ENCODE measurements at regions of chr4 and their contacts with region 1.

Region 1: GRCh38 chr4:6986781-6987587 is 56.2 kb upstream of the TADA2B start:
- DNase-seq: peak; percentile 96 to 98 (median 98)
- ATAC-seq: peak; percentile 89
- H3K4me3 ChIP-seq: peak overlapping the region; percentile 71
- H3K27ac ChIP-seq: peak overlapping the region; percentile 92
- H3K4me1 ChIP-seq: peaks cover 31 to 44% of the 10 kb centered on the region in 2 experiments; a peak in 4 of 5 replicates
- H3K27me3 ChIP-seq: no peaks in the 10 kb centered on the region
- CTCF ChIP-seq: peak in 1 of 3 experiments; percentile 14; a peak in 2 of 6 replicates
- EP300 ChIP-seq: no peak
- POLR2A ChIP-seq: peak; percentile 79
- RAD21 ChIP-seq: no peak; a peak in 1 of 4 replicates

Region 2: DNA sequence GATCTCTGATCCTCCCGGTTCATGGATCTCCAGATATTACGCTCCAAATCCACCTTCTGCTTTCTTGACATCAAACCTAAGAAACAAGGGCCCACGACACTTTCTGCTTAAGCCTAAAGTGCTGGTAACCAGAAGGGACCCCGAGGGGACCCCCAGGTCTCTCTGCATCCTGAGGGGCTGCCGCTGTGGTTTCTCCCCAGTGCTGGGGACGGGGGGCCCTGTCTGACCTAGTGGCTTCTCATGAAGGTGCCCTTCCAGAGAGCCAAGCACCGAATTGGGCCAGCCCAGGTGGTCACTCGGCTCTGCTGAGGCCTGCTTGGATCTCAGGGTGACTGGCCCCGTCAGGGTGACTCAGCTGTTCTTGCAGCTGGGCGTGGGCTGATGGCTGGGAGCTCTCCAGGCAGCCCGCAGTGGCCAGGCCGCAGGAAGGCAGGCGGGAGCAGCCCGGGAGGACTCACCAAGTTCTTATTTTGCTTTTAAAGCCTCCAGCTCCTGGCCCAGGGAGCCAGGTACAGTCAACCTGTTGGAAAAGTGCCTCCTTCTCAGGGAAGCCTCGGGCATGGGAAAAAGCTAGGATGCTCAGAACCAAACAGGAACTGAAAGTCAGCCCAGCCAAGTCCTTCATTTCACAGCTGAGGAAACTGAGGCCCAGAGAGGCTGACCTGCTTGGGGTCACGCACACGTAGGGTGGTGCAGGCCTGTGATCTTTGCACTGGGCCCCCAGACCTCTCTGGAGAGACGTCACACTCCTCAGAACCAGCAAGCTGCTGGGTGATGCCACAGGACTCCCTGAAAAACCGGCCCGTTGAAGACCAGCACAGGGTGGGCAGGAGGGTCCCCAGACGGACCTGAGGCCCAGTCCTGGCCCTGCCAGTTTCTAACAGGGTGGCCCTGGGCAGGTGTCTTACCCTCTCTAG is 254.3 kb before region 1 on chr4:
- CTCF ChIA-PET with region 1: no interaction called
- POLR2A ChIA-PET with region 1: interaction called, 4 read pairs
- in situ Hi-C with region 1: no loop called
- intact Hi-C with region 1: loop called (anchors 5 kb)
- DNase-seq: peak; percentile 86 to 95 (median 89)
- ATAC-seq: peak; percentile 92
- H3K4me3 ChIP-seq: no peak overlapping the region
- H3K27ac ChIP-seq: peak overlapping the region; percentile 93
- H3K4me1 ChIP-seq: peaks cover 55 to 58% of the 10 kb centered on the region in 2 experiments
- H3K27me3 ChIP-seq: no peaks in the 10 kb centered on the region
- CTCF ChIP-seq: no peak
- EP300 ChIP-seq: peak; percentile 88
- POLR2A ChIP-seq: peak; percentile 80
- RAD21 ChIP-seq: peak in 1 of 2 experiments; percentile 39; a peak in 2 of 4 replicates

Region 3: DNA sequence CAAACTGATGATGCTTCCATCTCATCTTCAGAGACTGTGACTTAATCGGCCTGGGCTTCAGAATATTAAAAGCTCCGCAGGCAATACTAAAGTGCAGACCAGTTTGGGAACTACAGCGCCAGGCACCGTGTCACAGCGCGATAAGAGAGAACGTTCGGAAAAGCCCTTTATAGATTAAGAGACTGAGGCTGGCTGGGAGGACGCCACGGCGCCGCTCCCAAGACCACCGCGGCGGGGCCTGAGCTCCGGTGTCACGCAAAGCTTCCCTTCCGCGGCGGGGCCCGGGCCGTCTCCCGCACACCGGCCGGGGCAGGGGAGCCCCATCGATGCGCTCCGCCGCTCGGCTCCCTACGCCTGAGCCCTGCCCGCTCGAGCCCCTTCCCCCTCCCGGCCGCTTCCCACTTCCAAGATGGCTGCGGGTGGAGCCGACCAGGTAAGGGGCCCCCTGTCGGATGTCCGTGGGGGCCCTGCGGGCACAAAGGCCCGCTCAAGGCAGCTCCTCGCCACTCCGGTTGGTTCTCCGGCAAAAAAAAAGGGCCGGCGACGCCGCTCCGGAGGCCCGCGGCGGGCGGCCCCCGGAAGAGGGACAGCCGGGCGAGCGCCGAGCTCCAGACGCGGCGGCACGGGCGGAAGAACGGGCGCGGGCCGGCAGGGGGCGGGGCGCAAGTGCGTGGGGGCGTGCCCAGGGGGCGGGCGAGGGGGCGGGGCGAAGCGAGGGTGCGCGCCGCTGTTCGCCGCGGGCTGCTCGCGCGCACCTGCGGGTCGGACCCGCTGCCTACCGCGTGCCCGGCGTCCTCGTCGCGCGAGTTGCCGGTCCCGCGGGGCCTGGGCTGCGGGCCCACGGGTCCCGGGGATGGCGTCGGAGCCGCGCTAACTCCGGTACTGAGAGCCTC is 77.7 kb before region 1 on chr4 and contains the start of gene TBC1D14:
- CTCF ChIA-PET with region 1: no interaction called
- POLR2A ChIA-PET with region 1: interaction called, 17 read pairs
- in situ Hi-C with region 1: no loop called
- intact Hi-C with region 1: loop called (anchors 2 kb)
- DNase-seq: peak; percentile 90 to 96 (median 94)
- ATAC-seq: peak; percentile 86
- H3K4me3 ChIP-seq: peak within 1 kb of the TSS; percentile 94
- H3K27ac ChIP-seq: peak within 1 kb of the TSS; percentile 98
- H3K4me1 ChIP-seq: peaks cover 48 to 58% of the 10 kb centered on the region in 2 experiments
- H3K27me3 ChIP-seq: no peaks in the 10 kb centered on the region
- CTCF ChIP-seq: 0 out of 6 replicates have a peak, but pooled peaks of 2 of the 3 experiments have one; percentile 19 to 23
- EP300 ChIP-seq: 0 out of 2 replicates have a peak, but pooled peaks have one; percentile 27
- POLR2A ChIP-seq: peak; percentile 78
- RAD21 ChIP-seq: no peak
- polyA plus RNA-seq, gene TBC1D14: 2.1 to 2.7 TPM

Region 4: DNA sequence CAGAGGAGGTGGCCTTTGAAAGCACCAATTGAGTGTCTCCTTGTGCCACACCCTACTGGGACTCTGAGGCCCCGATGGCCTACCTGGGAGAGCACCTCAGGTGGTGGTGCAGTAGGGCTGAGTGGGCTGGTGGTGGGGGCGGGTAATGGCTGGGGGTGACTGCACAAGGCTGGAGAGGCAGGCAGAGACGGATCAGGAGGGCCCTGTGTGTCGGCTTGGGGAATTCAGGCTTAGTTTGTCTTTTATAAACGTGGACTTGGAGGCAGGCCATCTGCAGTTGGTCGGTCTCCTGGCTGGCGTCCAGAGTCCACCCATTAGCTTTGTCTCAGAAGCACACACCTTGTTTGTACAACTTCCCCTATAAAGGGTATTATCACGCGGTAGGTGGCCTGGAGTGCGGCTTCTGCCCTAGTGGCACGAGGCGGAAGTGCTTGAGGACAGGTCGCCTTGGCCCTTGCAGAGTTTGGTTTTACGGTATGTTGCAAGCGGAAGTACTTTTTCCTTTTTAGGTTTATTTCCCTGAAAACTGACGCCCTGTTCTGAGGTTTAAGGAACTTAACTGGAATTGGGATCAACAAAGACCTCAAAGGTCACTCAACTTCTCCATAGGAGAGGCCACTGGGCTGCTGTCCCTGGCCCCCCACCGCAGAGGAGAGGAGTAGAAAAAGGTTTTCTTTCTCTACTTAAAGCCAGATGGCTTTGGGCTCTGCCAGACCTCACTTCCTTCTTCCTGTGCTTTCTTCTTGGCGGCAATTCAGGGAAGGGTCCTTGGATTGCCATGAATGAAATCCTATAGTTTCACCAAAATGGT is 69.3 kb before region 1 on chr4:
- CTCF ChIA-PET with region 1: no interaction called
- POLR2A ChIA-PET with region 1: interaction called, 17 read pairs
- in situ Hi-C with region 1: no loop called
- intact Hi-C with region 1: loop called (anchors 2 kb)
- DNase-seq: peak; percentile 63 to 92 (median 70)
- ATAC-seq: peak; percentile 81
- H3K4me3 ChIP-seq: peak overlapping the region; percentile 15; the same call in 1 of the 2 replicates
- H3K27ac ChIP-seq: peak overlapping the region; percentile 97
- H3K4me1 ChIP-seq: peaks cover 58 to 60% of the 10 kb centered on the region in 2 experiments
- H3K27me3 ChIP-seq: no peaks in the 10 kb centered on the region; a peak in 1 of 5 replicates
- CTCF ChIP-seq: peak; percentile 64 to 82 (median 69)
- EP300 ChIP-seq: 0 out of 2 replicates have a peak, but pooled peaks have one; percentile 58
- POLR2A ChIP-seq: no peak
- RAD21 ChIP-seq: no peak; a peak in 1 of 4 replicates

Region 5: DNA sequence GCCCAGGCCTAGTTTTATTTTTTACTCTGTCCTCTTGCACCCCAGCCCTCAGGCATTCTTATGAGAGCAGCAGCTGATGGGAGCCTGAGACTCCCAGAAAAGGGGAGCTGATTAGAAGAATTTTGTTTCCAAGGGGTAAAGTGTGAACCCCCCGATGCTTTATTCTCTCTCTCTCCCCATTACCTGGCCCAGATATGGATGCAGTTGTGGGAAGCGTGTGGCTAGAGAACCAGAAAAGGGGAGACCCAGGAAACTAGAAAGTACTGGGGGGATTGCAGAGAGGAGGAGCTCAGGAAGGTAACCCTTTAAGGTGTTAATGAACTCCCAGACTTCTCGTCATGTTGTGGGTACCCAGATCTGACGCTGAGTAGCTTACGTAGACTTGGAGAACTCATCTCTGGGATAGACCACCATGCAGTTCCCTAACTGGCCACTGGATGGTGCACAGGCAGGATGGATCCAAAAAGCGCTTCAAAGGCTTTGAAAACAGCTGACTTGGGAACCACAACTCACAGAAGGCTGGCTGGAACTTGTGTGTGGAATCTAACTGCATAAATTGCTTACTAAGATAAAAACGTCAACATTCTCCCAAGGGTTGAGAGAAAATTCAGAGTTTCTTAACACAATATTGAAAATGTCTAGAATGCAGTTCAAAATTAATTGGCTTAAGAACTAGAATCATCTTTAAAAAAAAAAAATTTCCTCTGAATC is 12.7 kb before region 1 on chr4:
- CTCF ChIA-PET with region 1: interaction called, 3 read pairs
- POLR2A ChIA-PET with region 1: interaction called, 11 read pairs
- in situ Hi-C with region 1: no loop called
- intact Hi-C with region 1: no loop called
- DNase-seq: peak; percentile 78 to 88 (median 82)
- ATAC-seq: peak; percentile 97
- H3K4me3 ChIP-seq: no peak overlapping the region
- H3K27ac ChIP-seq: no peak overlapping the region
- H3K4me1 ChIP-seq: peaks cover 3 to 14% of the 10 kb centered on the region in 2 experiments
- H3K27me3 ChIP-seq: no peaks in the 10 kb centered on the region
- CTCF ChIP-seq: peak; percentile 85 to 95 (median 86)
- EP300 ChIP-seq: no peak
- POLR2A ChIP-seq: no peak
- RAD21 ChIP-seq: peak; percentile 52 to 74

Region 6: GRCh38 chr4:7017446-7018330 is 30.7 kb after region 1 on chr4:
- CTCF ChIA-PET with region 1: no interaction called
- POLR2A ChIA-PET with region 1: no interaction called
- in situ Hi-C with region 1: no loop called
- intact Hi-C with region 1: no loop called
- DNase-seq: no peak
- ATAC-seq: no peak
- H3K4me3 ChIP-seq: no peak overlapping the region
- H3K27ac ChIP-seq: no peak overlapping the region; the same call in 2 of the 3 replicates
- H3K4me1 ChIP-seq: peaks cover 13 to 29% of the 10 kb centered on the region in 2 experiments; a peak in 4 of 5 replicates
- H3K27me3 ChIP-seq: no peaks in the 10 kb centered on the region
- CTCF ChIP-seq: no peak
- EP300 ChIP-seq: no peak
- POLR2A ChIP-seq: no peak
- RAD21 ChIP-seq: no peak

Region 7: DNA sequence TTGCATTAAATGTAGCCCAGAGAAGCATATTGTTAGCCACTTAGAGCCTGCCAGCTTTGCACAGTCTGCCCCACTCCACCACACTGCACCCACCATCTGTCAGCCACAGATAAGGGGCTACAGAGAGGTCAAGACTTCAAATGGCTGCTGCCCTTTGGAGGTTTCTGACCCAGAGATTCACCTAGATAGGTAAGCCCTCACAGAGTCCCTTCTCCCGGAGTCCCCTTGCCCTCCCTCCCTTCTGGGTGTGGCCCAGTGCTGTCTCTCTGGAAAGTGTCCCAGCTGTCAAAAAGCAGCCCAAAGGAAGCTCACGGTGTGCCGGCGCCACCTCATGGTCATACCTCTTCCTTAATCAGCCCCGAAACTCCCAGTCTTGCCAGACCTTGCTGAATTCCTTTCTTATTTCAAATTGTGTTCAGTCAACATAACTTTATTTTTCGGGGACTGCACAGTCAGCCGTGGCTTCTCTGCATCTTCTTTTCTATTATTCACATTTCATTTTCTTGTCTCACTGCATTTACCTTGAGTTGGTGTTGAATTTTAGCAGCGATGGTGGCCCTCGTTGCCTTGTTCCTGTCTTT is 95.0 kb after region 1 on chr4:
- CTCF ChIA-PET with region 1: no interaction called
- POLR2A ChIA-PET with region 1: no interaction called
- in situ Hi-C with region 1: no loop called
- intact Hi-C with region 1: loop called (anchors 5 kb)
- DNase-seq: peak; percentile 87 to 95 (median 90)
- ATAC-seq: peak; percentile 98
- H3K4me3 ChIP-seq: no peak overlapping the region
- H3K27ac ChIP-seq: no peak overlapping the region
- H3K4me1 ChIP-seq: peaks cover 11 to 21% of the 10 kb centered on the region in 2 experiments; a peak in 4 of 5 replicates
- H3K27me3 ChIP-seq: no peaks in the 10 kb centered on the region
- CTCF ChIP-seq: peak; percentile 84 to 96 (median 89)
- EP300 ChIP-seq: peak; percentile 50; the same call in 1 of the 2 replicates
- POLR2A ChIP-seq: no peak
- RAD21 ChIP-seq: peak; percentile 84 to 90

Measured in K562 (cell line).